ENCODE measurements at regions of chr18 and their contacts with region 1.

Region 1: DNA sequence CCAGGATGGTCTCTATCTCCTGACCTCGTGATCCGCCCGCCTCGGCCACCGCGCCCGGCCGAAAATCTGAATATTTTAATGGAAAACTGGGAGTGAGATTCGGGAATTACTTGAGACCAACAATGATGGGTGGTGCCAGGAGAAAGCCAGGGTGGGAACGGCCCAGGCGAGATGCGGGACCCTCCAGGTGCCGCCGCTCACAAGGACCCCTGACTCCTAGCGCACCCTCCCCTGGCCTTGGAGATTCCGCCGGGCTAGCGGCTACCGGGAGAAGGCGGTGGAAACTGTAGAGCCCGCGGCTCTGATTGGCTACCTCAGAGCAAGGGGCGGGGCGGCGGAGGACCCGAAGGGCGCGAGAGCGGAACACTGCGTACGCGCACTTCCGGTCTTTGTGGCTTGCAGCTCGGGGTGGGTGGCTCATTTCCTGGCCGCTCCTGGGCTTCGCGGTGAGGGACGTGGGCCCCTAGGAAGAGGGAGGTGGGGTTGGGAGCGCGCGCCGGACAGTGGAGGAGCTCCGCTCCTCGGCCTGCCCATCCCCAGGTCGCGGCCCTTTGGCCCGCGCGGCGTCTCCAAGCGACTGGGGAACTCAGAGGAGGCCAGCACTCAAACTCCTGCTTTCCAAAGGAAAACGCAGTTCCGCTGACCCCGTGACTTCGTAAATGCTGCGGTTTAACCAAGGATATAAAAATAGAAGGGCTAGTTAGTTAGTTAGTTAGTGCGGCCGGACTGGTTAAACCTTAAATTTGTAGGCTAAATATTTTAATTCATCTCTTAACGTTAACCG is at the start of gene ZNF397:
- DNase-seq: peak; percentile 96
- ATAC-seq: peak; percentile 100
- H3K4me3 ChIP-seq: peak within 1 kb of the TSS; percentile 53
- H3K27ac ChIP-seq: peak within 1 kb of the TSS; percentile 96
- H3K4me1 ChIP-seq: peaks cover 2% of the 10 kb centered on the region; the same call in 1 of the 2 replicates
- H3K27me3 ChIP-seq: no peaks in the 10 kb centered on the region
- CTCF ChIP-seq: no peak
- POLR2A ChIP-seq: peak; percentile 96
- RAD21 ChIP-seq: no peak
- total RNA-seq, gene ZNF397: 9.9 and 11.1 TPM in 2 replicates

Region 2: DNA sequence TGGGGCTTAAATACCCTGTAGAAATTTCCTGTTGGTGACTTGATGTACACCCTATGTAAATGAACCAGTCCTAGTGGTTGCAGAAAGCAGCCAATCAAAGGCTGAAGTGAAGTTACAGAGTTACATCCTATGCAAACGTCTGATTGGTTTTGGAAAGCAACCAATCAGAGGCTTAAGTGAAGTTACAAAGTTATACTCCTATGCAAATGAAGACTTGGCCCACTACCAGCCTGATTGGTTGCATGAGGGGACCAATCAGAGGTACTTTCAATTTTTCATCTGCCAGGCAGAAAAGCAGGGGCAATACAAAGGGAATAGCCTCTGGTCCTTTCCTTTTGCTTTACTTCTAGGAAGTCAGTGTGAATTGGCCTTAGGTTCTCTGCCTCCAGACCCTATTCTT is 13.6 kb before region 1 on chr18:
- CTCF ChIA-PET with region 1: no interaction called
- POLR2A ChIA-PET with region 1: no interaction called
- dilution Hi-C with region 1: no loop called
- in situ Hi-C with region 1: no loop called
- intact Hi-C with region 1: no loop called
- DNase-seq: peak; percentile 19
- ATAC-seq: peak; percentile 12; the same call in 1 of the 2 replicates
- H3K4me3 ChIP-seq: no peak overlapping the region
- H3K27ac ChIP-seq: no peak overlapping the region
- H3K4me1 ChIP-seq: peaks cover 2% of the 10 kb centered on the region; the same call in 1 of the 2 replicates
- H3K27me3 ChIP-seq: no peaks in the 10 kb centered on the region
- CTCF ChIP-seq: no peak
- POLR2A ChIP-seq: no peak
- RAD21 ChIP-seq: no peak

Region 3: GRCh38 chr18:35290073-35290735 is 49.3 kb after region 1 on chr18 and contains the start of gene ZSCAN30:
- CTCF ChIA-PET with region 1: no interaction called
- POLR2A ChIA-PET with region 1: no interaction called
- dilution Hi-C with region 1: no loop called
- in situ Hi-C with region 1: loop called (anchors 5 kb)
- intact Hi-C with region 1: loop called (anchors 5 kb)
- DNase-seq: peak; percentile 94
- ATAC-seq: peak; percentile 98
- H3K4me3 ChIP-seq: peak within 1 kb of the TSS; percentile 63
- H3K27ac ChIP-seq: peak within 1 kb of the TSS; percentile 74
- H3K4me1 ChIP-seq: peaks cover 2% of the 10 kb centered on the region; the same call in 1 of the 2 replicates
- H3K27me3 ChIP-seq: no peaks in the 10 kb centered on the region
- CTCF ChIP-seq: no peak
- POLR2A ChIP-seq: peak; percentile 86
- RAD21 ChIP-seq: no peak; the same call in 1 of the 2 replicates
- total RNA-seq, gene ZSCAN30: 16.9 and 17.7 TPM in 2 replicates

Region 4: DNA sequence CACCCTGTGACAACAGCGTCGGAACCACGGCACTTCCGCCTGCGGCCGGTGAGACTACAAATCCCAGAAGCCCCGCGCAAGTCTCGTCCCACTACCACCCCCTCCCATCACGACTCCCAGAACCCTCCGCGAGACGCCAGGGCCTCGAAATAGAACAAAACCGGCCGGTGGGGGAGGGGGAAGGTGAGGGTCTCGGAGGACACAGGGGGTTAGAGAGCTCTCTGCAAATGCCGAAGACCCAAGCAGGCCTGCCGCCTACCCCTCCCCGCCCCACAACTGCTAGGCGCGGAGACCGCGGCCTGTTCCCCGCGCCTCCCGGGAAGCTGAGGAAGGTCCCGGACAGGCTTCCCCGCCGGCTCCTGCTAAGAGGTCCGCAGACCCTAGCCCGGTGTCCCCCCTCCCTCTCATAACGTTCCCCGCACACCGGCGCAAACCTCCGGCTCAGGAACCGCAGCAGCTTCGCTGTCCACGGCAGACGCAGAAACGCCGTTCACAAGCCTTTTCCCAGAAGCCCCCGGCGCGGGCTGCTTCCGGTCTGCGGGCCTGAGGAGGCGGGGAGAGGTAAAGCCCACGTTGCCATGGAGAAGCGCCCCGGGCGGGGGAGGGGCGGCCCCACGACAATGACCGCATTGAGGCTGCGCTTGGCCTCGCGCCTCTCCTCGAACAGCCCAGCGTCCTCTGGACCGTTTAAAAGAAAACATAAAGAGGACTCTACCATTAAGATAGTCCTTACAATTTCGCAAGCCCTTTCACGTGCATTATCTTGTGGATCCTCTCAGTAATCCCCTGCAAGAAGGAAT is 103.3 kb after region 1 on chr18 and contains the start of gene ZNF24:
- CTCF ChIA-PET with region 1: no interaction called
- POLR2A ChIA-PET with region 1: no interaction called
- dilution Hi-C with region 1: no loop called
- in situ Hi-C with region 1: loop called (anchors 5 kb)
- intact Hi-C with region 1: loop called (anchors 2 kb)
- DNase-seq: peak; percentile 87
- ATAC-seq: peak; percentile 93
- H3K4me3 ChIP-seq: peak within 1 kb of the TSS; percentile 66
- H3K27ac ChIP-seq: peak within 1 kb of the TSS; percentile 84
- H3K4me1 ChIP-seq: peaks cover 2% of the 10 kb centered on the region; the same call in 1 of the 2 replicates
- H3K27me3 ChIP-seq: no peaks in the 10 kb centered on the region
- CTCF ChIP-seq: no peak
- POLR2A ChIP-seq: peak; percentile 93
- RAD21 ChIP-seq: no peak
- total RNA-seq, gene ZNF24: 20.8 and 38.3 TPM in 2 replicates

Region 5: DNA sequence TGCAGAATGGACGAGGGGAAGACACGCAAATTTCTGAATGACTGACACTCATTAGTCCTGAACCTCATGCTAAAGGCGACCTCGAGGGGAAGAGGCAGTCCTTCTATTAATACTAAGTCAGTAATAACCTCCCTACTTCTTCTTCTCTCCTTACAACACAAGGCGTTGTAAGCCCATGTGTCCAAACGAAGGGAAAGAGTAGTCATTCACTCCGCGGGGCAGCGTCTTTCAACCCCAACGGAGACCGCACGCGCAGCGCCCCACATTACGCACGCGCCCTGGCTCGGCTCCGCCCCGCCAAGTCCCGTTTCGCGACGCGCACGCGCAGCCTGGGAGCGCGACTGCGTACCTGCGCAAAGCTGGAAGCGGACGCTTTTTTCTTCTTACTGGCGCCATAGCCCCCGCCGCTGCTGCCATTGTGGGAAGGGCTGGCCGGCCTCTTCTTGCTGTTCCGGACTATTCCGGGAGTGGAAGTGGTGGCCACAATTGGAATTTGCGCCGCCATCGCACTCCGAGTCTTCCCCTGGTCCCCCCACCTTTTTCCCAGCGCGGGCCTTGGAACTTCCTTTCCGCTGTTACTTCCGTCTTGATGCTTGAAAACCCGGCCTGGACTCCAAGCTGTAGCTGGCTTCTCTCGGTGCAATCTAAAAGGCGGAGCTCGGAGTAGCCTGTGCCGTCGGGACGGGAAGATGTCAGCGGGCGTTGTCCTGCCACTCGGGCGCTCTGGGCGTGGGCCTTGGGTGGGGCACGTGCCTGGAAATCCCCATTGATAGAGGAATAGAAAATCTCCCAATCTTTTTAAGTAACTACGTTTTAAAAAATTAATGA is 256.7 kb after region 1 on chr18 and contains the start of gene INO80C:
- CTCF ChIA-PET with region 1: no interaction called
- POLR2A ChIA-PET with region 1: no interaction called
- dilution Hi-C with region 1: no loop called
- in situ Hi-C with region 1: no loop called
- intact Hi-C with region 1: loop called (anchors 2 kb)
- DNase-seq: peak; percentile 93
- ATAC-seq: peak; percentile 96
- H3K4me3 ChIP-seq: peak within 1 kb of the TSS; percentile 74
- H3K27ac ChIP-seq: peak within 1 kb of the TSS; percentile 93
- H3K4me1 ChIP-seq: peaks cover 3% of the 10 kb centered on the region
- H3K27me3 ChIP-seq: no peaks in the 10 kb centered on the region
- CTCF ChIP-seq: no peak
- POLR2A ChIP-seq: peak; percentile 89
- RAD21 ChIP-seq: peak; percentile 2; the same call in 1 of the 2 replicates
- total RNA-seq, gene INO80C: 4.4 and 5.6 TPM in 2 replicates

Region 6: DNA sequence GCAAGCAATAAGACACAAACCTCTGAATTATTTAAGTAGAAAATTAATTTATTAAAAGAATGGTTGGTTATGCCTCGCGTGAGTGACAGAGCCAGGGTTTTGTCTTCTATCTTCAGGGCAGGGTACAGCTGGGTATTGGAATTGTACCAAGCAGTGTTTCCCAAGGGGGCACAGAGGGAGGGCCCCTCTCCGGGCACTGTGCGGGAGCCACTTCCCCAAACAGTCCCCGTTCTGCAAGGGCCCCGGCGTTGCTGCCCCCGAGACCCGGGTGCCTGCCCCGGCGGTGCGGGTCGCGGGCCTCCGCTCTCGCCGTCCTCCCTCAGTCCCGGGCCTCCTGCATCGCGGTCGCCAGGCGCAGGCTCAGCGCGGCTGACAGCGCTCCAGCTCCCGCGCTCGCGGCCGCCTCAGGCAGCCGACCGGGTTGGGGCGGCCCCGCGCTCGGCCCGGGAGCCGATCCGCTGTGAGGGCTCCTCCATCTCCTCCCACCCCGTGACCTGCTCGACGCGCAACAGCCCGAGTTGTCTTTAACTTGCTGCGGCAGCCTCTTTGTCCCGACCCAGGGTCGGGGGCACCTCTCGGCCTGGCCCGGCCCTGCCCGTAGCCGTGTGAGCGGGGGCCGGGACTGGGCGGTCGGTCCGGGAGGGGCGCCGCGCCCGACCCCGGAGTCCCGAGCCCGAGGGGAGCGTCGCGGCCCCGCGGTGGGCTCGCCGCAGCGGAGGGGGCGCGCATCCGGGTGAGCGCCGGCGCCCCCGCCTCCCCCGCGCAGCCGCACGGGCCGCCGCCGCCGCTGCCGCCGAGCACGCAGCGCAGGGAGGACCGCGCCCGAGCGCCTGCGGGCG is 340.1 kb after region 1 on chr18:
- CTCF ChIA-PET with region 1: no interaction called
- POLR2A ChIA-PET with region 1: no interaction called
- dilution Hi-C with region 1: no loop called
- in situ Hi-C with region 1: no loop called
- intact Hi-C with region 1: no loop called
- DNase-seq: peak; percentile 41
- ATAC-seq: peak; percentile 75
- H3K4me3 ChIP-seq: peak overlapping the region; percentile 50
- H3K27ac ChIP-seq: peak overlapping the region; percentile 49
- H3K4me1 ChIP-seq: peaks cover 5% of the 10 kb centered on the region
- H3K27me3 ChIP-seq: no peaks in the 10 kb centered on the region
- CTCF ChIP-seq: no peak
- POLR2A ChIP-seq: no peak
- RAD21 ChIP-seq: peak; percentile 6; the same call in 1 of the 2 replicates